SK-N-SH (cell line): ENCODE measurements at regions of chr1 and their contacts with region 1.

Region 1: DNA sequence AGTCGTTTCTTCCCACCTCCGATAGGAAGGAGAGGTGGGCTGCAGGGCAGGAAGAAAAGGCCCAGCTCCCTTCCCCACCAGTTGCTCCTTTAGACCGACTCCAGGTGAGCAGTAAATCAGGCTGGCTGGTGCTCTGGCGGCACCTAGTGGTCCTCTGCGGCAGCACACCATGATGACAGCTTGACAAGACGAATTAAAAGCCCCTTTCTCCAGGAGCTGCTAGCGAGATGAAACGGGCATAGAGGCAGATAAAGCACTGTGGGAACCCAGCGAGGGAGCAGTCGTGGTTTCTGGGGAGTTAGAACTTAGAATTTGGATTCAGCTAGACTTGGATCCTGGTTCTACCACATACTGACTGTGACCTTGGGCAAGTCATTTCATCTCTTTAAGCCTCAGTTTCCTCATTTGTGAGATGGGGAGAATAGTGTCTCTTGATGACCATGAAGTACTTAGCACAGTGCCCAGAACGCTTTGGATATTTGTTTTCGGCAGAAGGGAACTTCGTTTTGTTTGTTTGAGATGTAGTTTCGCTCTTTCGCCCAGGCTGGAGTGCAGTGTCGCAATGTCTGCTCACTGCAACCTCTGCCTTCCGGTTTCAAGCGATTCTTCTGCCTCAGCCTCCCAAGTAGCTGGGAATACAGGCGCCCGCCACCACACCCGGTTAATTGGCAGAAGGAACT is 21.8 kb upstream of the COL9A2 start:
- DNase-seq: peak; percentile 78
- H3K4me3 ChIP-seq: peak overlapping the region in 1 of 2 experiments; percentile 38; a peak in 1 of 4 replicates
- H3K27ac ChIP-seq: no peak overlapping the region
- H3K4me1 ChIP-seq: no peaks in the 10 kb centered on the region; a peak in 1 of 4 replicates
- H3K27me3 ChIP-seq: no peaks in the 10 kb centered on the region; the same call in 1 of the 2 replicates
- CTCF ChIP-seq: peak; percentile 99
- EP300 ChIP-seq: no peak
- RAD21 ChIP-seq: peak; percentile 99

Region 2: GRCh38 chr1:40078512-40079333 is 260.2 kb before region 1 on chr1:
- CTCF ChIA-PET with region 1: interaction called, 57 read pairs
- POLR2A ChIA-PET with region 1: no interaction called
- DNase-seq: peak; percentile 70
- H3K4me3 ChIP-seq: no peak overlapping the region
- H3K27ac ChIP-seq: no peak overlapping the region
- H3K4me1 ChIP-seq: peaks cover 0 to 5% of the 10 kb centered on the region in 2 experiments; a peak in 1 of 4 replicates
- H3K27me3 ChIP-seq: no peaks in the 10 kb centered on the region
- CTCF ChIP-seq: peak; percentile 79
- EP300 ChIP-seq: no peak
- RAD21 ChIP-seq: peak; percentile 58

Region 3: DNA sequence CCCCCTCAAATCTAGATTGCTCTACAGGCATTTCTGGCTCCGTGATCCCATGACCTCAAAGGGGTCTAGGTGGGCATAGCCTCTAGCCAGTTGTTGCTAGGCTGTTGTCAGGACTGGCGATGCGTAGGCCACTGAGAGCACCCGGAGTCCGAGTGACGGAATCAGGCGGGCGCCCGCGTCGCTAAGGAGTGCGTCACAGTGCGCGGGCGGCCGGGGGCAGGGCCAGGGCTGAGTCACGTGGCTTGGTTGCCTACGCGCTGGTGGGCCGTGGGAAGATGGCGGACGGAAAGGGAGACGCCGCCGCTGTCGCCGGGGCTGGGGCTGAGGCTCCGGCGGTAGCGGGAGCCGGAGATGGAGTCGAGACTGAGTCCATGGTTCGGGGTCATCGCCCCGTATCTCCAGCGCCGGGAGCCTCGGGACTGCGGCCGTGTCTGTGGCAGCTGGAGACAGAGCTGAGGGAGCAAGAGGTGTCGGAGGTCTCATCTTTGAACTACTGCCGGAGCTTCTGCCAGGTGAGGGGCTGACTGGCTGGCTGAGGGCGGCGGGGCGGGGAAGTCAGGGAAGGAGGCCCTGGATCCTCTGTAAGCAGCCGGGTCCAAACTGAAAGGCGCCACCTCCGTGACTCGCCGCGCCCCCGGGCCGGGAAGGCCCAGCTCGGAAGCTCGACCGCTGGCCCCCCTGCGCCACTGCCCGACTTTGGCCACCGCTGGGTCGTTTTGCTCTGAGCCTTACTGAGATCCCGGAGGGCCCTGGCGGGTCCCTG is 177.6 kb before region 1 on chr1 and contains the start of gene RLF:
- CTCF ChIA-PET with region 1: interaction called, 280 read pairs
- POLR2A ChIA-PET with region 1: no interaction called
- DNase-seq: peak; percentile 96
- H3K4me3 ChIP-seq: peak within 1 kb of the TSS; percentile 74 to 96
- H3K27ac ChIP-seq: peak within 1 kb of the TSS; percentile 89 to 92
- H3K4me1 ChIP-seq: peaks cover 4 to 9% of the 10 kb centered on the region in 2 experiments; a peak in 3 of 4 replicates
- H3K27me3 ChIP-seq: no peaks in the 10 kb centered on the region
- CTCF ChIP-seq: no peak; the same call in 1 of the 2 replicates
- EP300 ChIP-seq: peak in 1 of 2 experiments; percentile 38; a peak in 1 of 4 replicates
- RAD21 ChIP-seq: no peak
- polyA plus RNA-seq, gene RLF: 2.3 and 3.0 TPM in 2 replicates

Region 4: GRCh38 chr1:40218333-40218732 is 120.6 kb before region 1 on chr1:
- CTCF ChIA-PET with region 1: no interaction called
- POLR2A ChIA-PET with region 1: no interaction called
- DNase-seq: no peak
- H3K4me3 ChIP-seq: no peak overlapping the region
- H3K27ac ChIP-seq: no peak overlapping the region
- H3K4me1 ChIP-seq: no peaks in the 10 kb centered on the region
- H3K27me3 ChIP-seq: no peaks in the 10 kb centered on the region
- CTCF ChIP-seq: no peak
- EP300 ChIP-seq: no peak
- RAD21 ChIP-seq: no peak

Region 5: DNA sequence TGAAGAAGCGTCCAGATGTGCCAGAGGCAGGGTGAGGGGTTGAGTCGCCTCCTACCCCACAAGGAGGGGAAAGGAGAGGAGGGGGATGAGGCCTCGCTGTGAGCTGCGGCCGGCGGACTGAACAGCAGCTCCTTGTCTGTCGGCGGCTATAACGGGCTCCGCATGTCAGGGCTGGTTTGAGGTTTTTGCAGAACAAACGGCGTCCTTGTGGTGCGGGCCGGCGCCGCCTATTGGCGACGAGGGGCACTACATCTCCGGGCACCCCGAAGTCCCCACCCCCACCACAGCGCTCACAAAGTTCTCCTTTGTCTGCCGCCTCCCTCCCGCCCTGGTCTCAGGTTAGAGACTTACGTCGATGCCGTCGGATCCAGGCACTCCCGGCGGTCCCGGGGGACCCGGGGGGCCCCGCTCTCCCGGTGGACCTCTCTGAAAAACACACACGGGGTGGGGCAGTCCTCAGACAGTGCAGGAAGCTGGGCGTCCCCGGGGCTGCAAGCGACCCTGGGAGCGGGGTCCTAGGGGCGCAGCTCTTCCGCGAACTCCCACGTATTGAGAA is 23.6 kb before region 1 on chr1:
- CTCF ChIA-PET with region 1: interaction called, 150 read pairs
- POLR2A ChIA-PET with region 1: interaction called, 5 read pairs
- DNase-seq: peak; percentile 92
- H3K4me3 ChIP-seq: peak overlapping the region; percentile 29 to 47; a peak in 3 of 4 replicates
- H3K27ac ChIP-seq: no peak overlapping the region
- H3K4me1 ChIP-seq: peaks cover 0 to 6% of the 10 kb centered on the region in 2 experiments; a peak in 1 of 4 replicates
- H3K27me3 ChIP-seq: no peaks in the 10 kb centered on the region; the same call in 1 of the 2 replicates
- CTCF ChIP-seq: peak; percentile 75
- EP300 ChIP-seq: no peak
- RAD21 ChIP-seq: peak; percentile 58

Region 6: DNA sequence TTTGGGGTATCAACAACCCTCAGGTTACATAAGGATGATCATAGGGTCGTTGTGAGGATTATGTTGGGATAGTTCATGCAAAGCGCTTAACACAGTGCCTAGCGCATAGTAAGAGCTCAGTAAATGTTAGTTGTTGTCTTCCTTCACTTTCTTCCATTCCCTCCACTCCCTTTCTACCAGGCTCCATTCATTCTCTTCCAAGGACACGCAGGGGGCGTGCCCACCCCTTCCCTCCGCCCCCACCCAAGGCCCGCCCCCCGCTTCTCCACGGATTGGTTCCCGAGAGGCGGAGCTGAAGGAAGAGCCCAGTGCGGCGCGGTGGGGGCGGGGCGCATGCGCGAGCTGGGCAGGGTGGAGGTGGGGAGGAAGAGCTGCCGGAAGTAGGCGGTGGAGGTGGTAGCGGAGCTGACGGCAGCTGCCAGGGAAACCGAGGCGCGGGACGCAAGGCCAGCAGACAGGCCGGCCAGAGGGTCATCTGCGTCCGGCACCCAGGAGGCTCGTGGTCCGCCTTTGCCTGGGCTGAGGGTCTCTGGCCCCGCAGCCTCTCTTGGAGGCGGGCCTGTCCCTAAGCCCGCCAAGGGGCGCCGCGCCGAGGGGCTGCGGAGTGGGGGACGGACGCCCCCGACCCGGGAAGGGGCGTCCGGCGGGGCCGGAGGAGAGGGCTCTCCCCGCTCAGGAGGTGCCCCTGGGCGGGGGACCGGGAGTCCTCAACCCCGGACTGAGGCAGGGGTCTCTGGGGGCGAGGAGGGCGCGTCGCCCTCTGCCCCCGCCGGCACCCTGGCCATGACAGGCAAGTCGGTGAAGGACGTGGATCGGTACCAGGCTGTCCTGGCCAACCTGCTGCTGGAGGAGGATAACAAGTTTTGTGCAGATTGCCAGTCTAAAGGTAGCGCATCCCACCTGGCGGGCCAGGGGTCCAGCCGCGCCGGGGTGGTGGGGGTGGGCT is 34.7 kb after region 1 on chr1 and contains the start of gene SMAP2:
- CTCF ChIA-PET with region 1: interaction called, 17 read pairs
- POLR2A ChIA-PET with region 1: no interaction called
- DNase-seq: peak; percentile 99
- H3K4me3 ChIP-seq: peak within 1 kb of the TSS; percentile 91 to 93
- H3K27ac ChIP-seq: peak within 1 kb of the TSS; percentile 71 to 78
- H3K4me1 ChIP-seq: peaks cover 0 to 10% of the 10 kb centered on the region in 2 experiments; a peak in 2 of 4 replicates
- H3K27me3 ChIP-seq: no peaks in the 10 kb centered on the region
- CTCF ChIP-seq: no peak
- EP300 ChIP-seq: no peak
- RAD21 ChIP-seq: no peak
- polyA plus RNA-seq, gene SMAP2: 11.2 and 12.7 TPM in 2 replicates

Region 7: DNA sequence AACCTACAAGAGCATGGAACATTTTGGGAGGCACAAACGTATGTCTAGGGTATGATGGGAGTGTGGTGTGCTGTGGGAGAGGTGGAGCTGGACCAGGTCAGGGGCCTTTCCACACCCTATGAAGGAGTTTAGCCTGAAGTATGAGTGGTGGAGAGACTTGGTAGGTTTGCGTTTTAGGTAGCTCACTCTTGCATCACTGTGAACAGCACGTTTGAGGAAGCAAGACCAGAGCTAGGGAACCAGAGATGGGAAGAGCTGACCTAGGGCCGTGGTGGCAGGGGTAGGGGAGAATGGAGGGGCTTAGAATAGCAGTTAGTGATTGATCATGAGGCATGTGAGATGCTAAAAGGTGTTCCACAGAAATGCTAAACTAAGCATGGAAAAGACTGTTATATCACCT is 86.3 kb after region 1 on chr1:
- CTCF ChIA-PET with region 1: interaction called, 11 read pairs
- POLR2A ChIA-PET with region 1: no interaction called
- DNase-seq: no peak
- H3K4me3 ChIP-seq: no peak overlapping the region
- H3K27ac ChIP-seq: no peak overlapping the region
- H3K4me1 ChIP-seq: no peaks in the 10 kb centered on the region
- H3K27me3 ChIP-seq: no peaks in the 10 kb centered on the region
- CTCF ChIP-seq: no peak
- EP300 ChIP-seq: no peak
- RAD21 ChIP-seq: no peak